A549 (cell line): ENCODE measurements at regions of chr10 and their contacts with region 1.

Region 1: DNA sequence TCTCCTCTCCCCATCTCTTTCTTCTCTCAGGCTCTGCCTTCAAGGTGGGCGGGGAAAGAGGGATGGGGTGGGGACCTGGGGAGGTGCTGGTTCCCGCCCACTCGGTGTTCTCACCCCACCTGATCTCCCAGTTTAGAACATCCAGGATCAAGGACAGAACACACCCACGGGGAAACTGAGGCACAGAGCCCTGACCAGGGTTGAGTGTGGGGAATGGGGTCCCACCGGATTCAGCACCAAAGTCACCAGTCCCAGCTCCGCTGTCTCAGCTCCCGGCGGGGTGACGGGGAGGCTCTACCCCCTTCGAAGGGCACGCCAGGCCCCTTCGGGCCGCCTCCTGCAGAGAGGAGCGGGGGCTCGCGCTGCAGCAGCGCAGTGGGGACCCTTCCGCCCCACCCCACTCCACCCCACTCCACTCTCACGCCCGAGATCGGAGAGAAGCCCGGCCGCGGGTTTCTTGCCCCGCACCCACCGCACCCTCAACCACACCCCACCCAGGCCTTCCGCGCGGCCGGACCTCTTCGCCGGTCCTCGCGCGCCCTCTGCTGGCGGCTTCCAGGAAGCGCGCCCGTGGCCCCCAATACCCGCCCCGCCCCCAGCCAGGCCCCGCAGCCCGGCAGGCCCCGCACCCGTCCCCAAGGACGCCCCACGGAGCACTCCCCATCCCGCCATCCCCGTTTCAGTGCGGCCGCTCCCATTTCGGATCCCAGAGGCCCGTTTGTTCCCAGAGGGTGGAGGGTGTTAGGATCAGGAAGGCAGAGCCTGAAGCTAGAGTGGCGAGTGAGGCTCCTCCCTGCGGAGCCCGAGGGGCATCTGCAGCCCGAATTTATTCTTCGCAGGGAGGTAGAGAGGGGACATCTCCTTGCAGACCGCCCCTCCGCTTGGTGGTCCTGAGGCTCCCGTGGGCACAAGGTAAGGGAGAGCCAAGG is 18.0 kb downstream of the POLL start:
- DNase-seq: peak; percentile 69 to 88
- ATAC-seq: peak; percentile 69 to 88
- H3K4me3 ChIP-seq: peak overlapping the region; percentile 63
- H3K27ac ChIP-seq: peak overlapping the region; percentile 81 to 92
- H3K4me1 ChIP-seq: peaks cover 10% of the 10 kb centered on the region; the same call in 2 of the 3 replicates
- CTCF ChIP-seq: peak; percentile 93
- EP300 ChIP-seq: no peak
- POLR2A ChIP-seq: peak; percentile 26; the same call in 1 of the 2 replicates
- RAD21 ChIP-seq: peak; percentile 75 to 96

Region 2: DNA sequence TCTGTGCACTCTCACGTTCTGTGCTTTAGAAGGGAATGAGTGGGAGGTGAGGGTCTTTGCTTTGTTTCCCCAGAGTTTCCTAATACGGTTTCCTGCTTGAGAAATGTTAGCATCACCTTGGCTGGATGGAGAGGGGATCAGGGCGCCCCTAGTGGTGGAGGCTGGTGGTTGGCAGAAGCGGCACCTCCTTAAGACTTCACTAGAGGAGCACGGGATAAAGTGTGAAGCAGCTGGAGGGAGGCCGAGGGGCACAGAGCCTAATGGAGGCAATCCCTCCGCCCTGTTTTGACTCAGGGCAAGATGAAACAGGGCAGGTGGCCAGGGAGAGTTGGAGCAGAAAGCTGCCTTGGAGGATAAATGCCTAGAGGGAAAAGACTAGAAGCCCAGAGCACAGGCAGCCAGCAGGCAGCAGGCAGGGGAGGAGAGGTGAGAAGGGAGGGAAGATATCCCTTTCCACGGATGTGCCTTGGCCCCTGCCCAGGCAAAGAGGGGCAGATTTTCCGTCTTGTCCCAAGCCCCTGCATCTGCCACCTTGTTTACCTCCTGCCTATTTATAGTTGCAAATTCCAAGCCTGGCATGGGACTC is 272.1 kb before region 1 on chr10:
- CTCF ChIA-PET with region 1: interaction called, 23 read pairs
- POLR2A ChIA-PET with region 1: no interaction called
- DNase-seq: peak; percentile 74 to 82
- ATAC-seq: peak; percentile 85 to 93
- H3K4me3 ChIP-seq: no peak overlapping the region
- H3K27ac ChIP-seq: no peak overlapping the region
- H3K4me1 ChIP-seq: no peaks in the 10 kb centered on the region
- CTCF ChIP-seq: peak; percentile 87
- EP300 ChIP-seq: no peak
- POLR2A ChIP-seq: no peak
- RAD21 ChIP-seq: peak in 1 of 2 experiments; percentile 32; a peak in 1 of 5 replicates

Region 3: GRCh38 chr10:101495324-101495925 is 74.7 kb before region 1 on chr10:
- CTCF ChIA-PET with region 1: interaction called, 14 read pairs
- POLR2A ChIA-PET with region 1: no interaction called
- DNase-seq: peak in 1 of 2 experiments; percentile 41
- ATAC-seq: peak; percentile 89 to 91
- H3K4me3 ChIP-seq: no peak overlapping the region
- H3K27ac ChIP-seq: no peak overlapping the region
- H3K4me1 ChIP-seq: no peaks in the 10 kb centered on the region
- CTCF ChIP-seq: peak; percentile 50; the same call in 2 of the 3 replicates
- EP300 ChIP-seq: no peak
- POLR2A ChIP-seq: no peak
- RAD21 ChIP-seq: peak; percentile 30 to 44; a peak in 2 of 5 replicates

Region 4: GRCh38 chr10:101558202-101558601 is 11.9 kb before region 1 on chr10:
- CTCF ChIA-PET with region 1: interaction called, 22 read pairs
- POLR2A ChIA-PET with region 1: no interaction called
- DNase-seq: no peak
- ATAC-seq: no peak
- H3K4me3 ChIP-seq: no peak overlapping the region
- H3K27ac ChIP-seq: 0 out of 6 replicates have a peak overlapping the region, but pooled peaks of 1 of the 2 experiments have one; percentile 2
- H3K4me1 ChIP-seq: peaks cover 5% of the 10 kb centered on the region; the same call in 1 of the 3 replicates
- CTCF ChIP-seq: no peak
- EP300 ChIP-seq: no peak
- POLR2A ChIP-seq: no peak
- RAD21 ChIP-seq: no peak

Region 5: GRCh38 chr10:101625821-101626412 is 55.8 kb after region 1 on chr10:
- CTCF ChIA-PET with region 1: no interaction called
- POLR2A ChIA-PET with region 1: no interaction called
- DNase-seq: no peak
- ATAC-seq: no peak; a peak in 1 of 6 replicates
- H3K4me3 ChIP-seq: no peak overlapping the region
- H3K27ac ChIP-seq: no peak overlapping the region
- H3K4me1 ChIP-seq: no peaks in the 10 kb centered on the region
- CTCF ChIP-seq: no peak
- EP300 ChIP-seq: no peak
- POLR2A ChIP-seq: no peak
- RAD21 ChIP-seq: no peak